ENCODE measurements at regions of chr12 and their contacts with region 1.

Region 1: DNA sequence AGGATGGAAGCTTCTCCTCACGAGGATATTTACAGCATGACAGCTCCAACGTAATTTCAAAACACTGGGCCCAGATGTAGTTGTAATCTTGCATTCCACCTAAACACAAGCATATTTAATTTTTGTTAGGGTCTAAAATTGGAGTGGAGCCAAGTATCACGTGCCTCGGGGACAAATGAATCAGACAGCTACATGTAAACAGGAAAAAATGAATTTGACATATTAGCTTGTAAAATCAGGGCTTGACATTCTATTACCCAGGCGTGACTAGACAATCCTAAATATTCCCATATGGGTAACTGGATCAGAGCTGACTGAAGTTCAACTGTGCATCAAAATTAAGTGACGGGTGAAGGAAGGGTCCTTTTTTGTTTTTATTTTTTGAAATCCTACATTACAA is 59.0 kb downstream of the MDM2 start:
- DNase-seq: no peak

Region 2: DNA sequence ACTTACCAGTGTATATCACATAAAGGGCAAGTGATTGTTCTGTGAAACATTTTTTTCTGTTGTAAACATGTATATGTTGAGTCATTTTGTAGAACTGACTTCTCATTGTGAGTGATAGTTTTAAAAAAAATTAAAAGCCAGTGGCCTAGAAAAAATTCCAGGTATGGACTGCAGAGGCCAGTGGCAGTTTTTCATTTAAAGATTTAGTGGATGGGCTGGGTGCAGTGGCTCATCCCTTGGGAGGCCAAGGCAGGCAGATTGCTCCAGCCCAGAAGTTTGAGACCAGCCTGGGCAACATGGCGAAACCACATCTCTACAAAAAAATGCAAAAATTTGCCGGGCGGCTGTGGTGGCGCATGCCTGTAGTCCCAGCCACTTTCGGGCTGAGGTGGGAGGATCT is 450.1 kb before region 1 on chr12:
- in situ Hi-C with region 1: no loop called
- DNase-seq: no peak

Region 3: GRCh38 chr12:69059483-69060457 is 192.8 kb after region 1 on chr12:
- in situ Hi-C with region 1: loop called (anchors 10 kb)
- DNase-seq: peak; percentile 30